ENCODE measurements at regions of chr3 and their contacts with region 1.

Region 1: GRCh38 chr3:19519134-19519533 is 370.8 kb downstream of the KCNH8 start:
- DNase-seq: no peak
- ATAC-seq: no peak
- H3K4me3 ChIP-seq: no peak overlapping the region
- H3K27ac ChIP-seq: no peak overlapping the region
- H3K4me1 ChIP-seq: no peaks in the 10 kb centered on the region
- H3K27me3 ChIP-seq: no peaks in the 10 kb centered on the region

Region 2: DNA sequence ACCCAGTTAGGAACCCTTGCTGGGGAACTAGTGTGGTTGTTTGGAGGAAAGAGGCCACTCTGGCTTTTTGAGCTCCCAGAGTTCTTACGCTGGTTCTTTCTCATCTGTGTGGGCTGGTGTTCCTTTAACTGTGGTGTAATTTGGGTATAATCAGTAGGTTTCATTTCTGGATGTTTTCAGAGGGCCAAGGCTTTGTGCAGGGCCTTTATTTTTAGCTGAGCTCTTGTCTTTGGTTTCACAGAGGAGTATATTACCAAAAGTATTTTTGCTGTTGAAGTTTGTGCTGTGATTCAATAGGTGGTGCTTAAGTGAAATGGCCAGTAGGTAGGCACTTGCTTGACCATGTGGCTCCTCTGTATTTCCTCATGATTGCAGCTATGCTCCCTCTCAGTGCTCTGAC is 13.0 kb before region 1 on chr3:
- intact Hi-C with region 1: loop called in 1 of 2 experiments (anchors 1 kb)
- DNase-seq: no peak
- ATAC-seq: no peak
- H3K4me3 ChIP-seq: no peak overlapping the region
- H3K27ac ChIP-seq: no peak overlapping the region
- H3K4me1 ChIP-seq: no peaks in the 10 kb centered on the region
- H3K27me3 ChIP-seq: no peaks in the 10 kb centered on the region